Body of pancreas (tissue), 4 donors: ENCODE measurements at regions of chr16 and their contacts with region 1.

Region 1: GRCh38 chr16:67883872-67884261 is 818 bp upstream of the NRN1L start:
- DNase-seq: peak; percentile 68 to 83 (median 72)
- ATAC-seq: peak; percentile 74
- H3K4me3 ChIP-seq: no peak overlapping the region
- H3K27ac ChIP-seq: no peak overlapping the region
- H3K4me1 ChIP-seq: no peaks in the 10 kb centered on the region
- H3K27me3 ChIP-seq: no peaks in the 10 kb centered on the region
- CTCF ChIP-seq: peak; percentile 76 to 89 (median 84)
- POLR2A ChIP-seq: no peak

Region 2: DNA sequence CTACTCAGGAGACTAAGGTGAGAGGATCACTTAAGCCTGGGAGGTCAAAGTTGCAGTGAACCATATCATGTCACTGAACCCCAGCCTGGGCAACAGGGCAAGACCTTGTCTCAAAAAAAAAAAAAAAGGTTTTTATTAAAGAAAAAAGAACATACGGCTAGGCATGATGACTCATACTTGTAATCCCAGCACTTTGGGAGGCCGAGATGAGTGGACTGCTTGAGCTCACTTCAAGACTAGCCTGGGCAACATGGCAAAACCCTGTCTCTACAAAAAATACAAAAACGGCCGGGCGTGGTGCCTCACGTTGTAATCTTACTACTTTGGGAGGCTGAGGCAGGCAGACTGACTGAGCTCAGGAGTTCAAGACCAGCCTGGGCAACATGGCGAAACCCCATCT is 115.9 kb before region 1 on chr16:
- intact Hi-C with region 1: no loop called
- DNase-seq: no peak
- ATAC-seq: no peak
- H3K4me3 ChIP-seq: no peak overlapping the region
- H3K27ac ChIP-seq: no peak overlapping the region
- H3K4me1 ChIP-seq: peaks cover 4% of the 10 kb centered on the region
- H3K27me3 ChIP-seq: no peaks in the 10 kb centered on the region
- CTCF ChIP-seq: no peak
- POLR2A ChIP-seq: no peak

Region 3: GRCh38 chr16:67822511-67822910 is 61.4 kb before region 1 on chr16:
- intact Hi-C with region 1: no loop called
- DNase-seq: no peak
- ATAC-seq: no peak
- H3K4me3 ChIP-seq: no peak overlapping the region
- H3K27ac ChIP-seq: no peak overlapping the region
- H3K4me1 ChIP-seq: no peaks in the 10 kb centered on the region
- H3K27me3 ChIP-seq: no peaks in the 10 kb centered on the region
- CTCF ChIP-seq: no peak
- POLR2A ChIP-seq: no peak

Region 4: GRCh38 chr16:67919622-67920221 is 35.9 kb after region 1 on chr16:
- intact Hi-C with region 1: loop called (anchors 5 kb)
- DNase-seq: no peak
- ATAC-seq: no peak
- H3K4me3 ChIP-seq: no peak overlapping the region
- H3K27ac ChIP-seq: no peak overlapping the region
- H3K4me1 ChIP-seq: peaks cover 48% of the 10 kb centered on the region
- H3K27me3 ChIP-seq: no peaks in the 10 kb centered on the region
- CTCF ChIP-seq: no peak
- POLR2A ChIP-seq: no peak